Right cardiac atrium (tissue), 5 donors: ENCODE measurements at regions of chr2 and their contacts with region 1.

Region 1: GRCh38 chr2:241877989-241878970 is 8.8 kb downstream of the RTP5 start:
- DNase-seq: peak; percentile 77 to 92 (median 91)
- ATAC-seq: peak; percentile 20
- H3K4me3 ChIP-seq: no peak overlapping the region
- H3K27ac ChIP-seq: no peak overlapping the region
- H3K4me1 ChIP-seq: no peaks in the 10 kb centered on the region
- H3K27me3 ChIP-seq: no peaks in the 10 kb centered on the region

Region 2: GRCh38 chr2:241417626-241418025 is 460.7 kb before region 1 on chr2:
- intact Hi-C with region 1: no loop called
- DNase-seq: no peak
- ATAC-seq: no peak
- H3K4me3 ChIP-seq: no peak overlapping the region
- H3K27ac ChIP-seq: no peak overlapping the region
- H3K4me1 ChIP-seq: no peaks in the 10 kb centered on the region
- H3K27me3 ChIP-seq: no peaks in the 10 kb centered on the region

Region 3: DNA sequence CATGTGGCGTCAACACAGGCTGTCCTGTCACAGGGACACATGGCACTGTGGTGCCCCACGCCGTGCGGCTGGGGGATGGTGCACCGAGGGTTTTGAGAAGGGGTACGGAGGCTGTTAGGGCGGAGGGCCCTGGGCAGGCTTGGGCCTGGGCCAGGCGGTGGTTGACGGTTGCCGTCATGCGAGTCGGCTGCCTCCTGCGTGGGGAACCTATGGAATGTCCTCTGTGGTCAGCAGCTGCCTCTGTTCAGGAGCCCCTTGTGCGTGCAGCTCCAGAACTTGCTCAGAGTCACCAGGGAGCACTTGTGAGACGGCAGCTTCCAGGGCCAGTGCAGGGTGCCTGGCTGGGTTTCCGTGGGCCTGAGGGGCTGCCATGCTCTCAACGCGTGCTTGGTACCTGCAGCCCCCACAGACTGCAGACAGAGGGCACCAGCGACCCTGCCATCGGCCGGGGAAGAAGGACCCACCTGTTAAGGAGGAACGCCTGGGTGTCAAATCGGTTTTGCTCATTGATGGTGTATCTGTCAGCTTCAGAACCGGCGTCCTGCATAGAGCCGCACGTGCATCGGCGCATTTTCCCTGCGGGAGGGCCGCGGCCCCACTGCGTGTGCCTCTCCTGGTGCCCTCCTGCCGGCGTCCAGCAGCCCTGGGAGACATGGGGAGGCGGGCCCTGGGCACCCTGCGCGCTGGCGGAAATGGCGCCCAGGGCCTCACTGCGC is 153.9 kb before region 1 on chr2:
- intact Hi-C with region 1: loop called in 1 of 4 experiments (anchors 10 kb)
- DNase-seq: no peak
- ATAC-seq: no peak
- H3K4me3 ChIP-seq: no peak overlapping the region
- H3K27ac ChIP-seq: no peak overlapping the region
- H3K4me1 ChIP-seq: no peaks in the 10 kb centered on the region
- H3K27me3 ChIP-seq: no peaks in the 10 kb centered on the region

Region 4: DNA sequence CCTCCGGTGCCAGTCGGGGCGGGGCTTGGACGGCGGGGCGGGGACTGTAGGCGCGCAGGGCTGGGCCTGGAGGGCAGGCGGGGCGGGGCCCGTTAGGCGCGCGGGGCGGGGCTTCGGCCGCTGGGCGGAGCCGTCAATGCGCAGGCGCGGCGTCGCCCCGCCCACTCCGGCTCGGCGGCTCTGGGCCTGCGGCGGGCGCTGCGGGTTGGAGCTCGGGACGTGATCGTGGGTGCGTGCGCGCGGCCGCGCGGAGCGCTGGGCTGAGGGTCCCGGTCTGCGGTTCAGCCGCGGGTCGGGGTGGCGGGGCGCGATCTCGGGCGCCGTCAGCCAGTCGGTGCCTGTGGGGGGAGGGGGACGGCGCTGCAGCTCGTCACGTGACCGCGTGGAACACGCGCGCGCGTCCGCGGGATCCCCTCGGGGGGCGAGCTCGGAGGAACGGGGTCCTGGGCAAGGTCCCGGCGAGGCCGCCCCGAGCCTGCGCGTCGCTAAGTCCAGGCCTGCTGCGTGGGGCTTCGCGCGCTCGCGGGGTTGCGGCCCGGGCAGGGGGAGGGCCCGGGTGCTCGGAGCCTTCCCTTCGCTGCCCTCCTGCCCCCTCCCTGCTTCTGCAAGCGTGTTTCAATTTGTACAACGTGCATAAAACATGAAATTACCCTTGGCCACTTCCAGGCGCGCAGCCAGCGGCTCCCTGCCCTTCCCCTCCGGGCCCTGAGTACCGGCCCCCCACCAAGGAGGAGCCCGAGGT is 143.6 kb before region 1 on chr2 and contains the start of gene D2HGDH:
- intact Hi-C with region 1: loop called (anchors 10 kb)
- DNase-seq: peak; percentile 96 to 99 (median 98)
- ATAC-seq: peak; percentile 91 to 95
- H3K4me3 ChIP-seq: peak within 1 kb of the TSS; percentile 74
- H3K27ac ChIP-seq: peak within 1 kb of the TSS; percentile 75
- H3K4me1 ChIP-seq: no peaks in the 10 kb centered on the region
- H3K27me3 ChIP-seq: no peaks in the 10 kb centered on the region
- total RNA-seq, gene D2HGDH: 16.1 to 22.3 (median 18.3) TPM

Region 5: DNA sequence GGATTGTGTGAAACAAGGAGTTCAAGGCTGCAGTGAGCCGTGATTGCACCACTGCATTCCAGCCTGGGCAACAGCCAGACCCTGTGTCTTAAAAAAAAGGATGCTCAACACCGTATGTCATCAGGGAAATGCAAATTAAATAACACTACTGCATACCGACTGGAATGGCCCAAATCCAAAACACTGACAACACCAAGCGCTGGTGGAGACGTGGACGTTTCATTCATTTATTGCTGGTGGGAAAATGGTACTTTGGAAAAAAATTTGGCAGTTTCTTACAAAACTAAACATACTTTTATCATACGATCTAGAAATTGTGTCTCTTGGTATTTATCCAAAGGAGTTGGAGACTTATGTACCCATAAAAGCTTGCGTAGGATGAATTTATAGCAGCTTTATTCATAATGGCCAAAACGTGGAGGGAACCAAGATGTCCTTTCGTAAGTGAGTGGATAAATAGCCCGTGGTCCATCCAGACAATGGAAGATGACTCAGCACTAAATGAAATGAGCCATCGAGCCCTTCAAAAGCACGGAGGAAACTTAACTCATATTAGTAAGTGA is 45.1 kb before region 1 on chr2:
- intact Hi-C with region 1: no loop called
- DNase-seq: no peak
- ATAC-seq: peak in 1 of 2 donors; percentile 46
- H3K4me3 ChIP-seq: no peak overlapping the region
- H3K27ac ChIP-seq: no peak overlapping the region
- H3K4me1 ChIP-seq: no peaks in the 10 kb centered on the region
- H3K27me3 ChIP-seq: no peaks in the 10 kb centered on the region

Region 6: GRCh38 chr2:241908686-241909420 is 30.6 kb after region 1 on chr2:
- intact Hi-C with region 1: no loop called
- DNase-seq: no peak
- ATAC-seq: peak in 1 of 2 donors; percentile 31
- H3K4me3 ChIP-seq: no peak overlapping the region
- H3K27ac ChIP-seq: no peak overlapping the region
- H3K4me1 ChIP-seq: no peaks in the 10 kb centered on the region
- H3K27me3 ChIP-seq: no peaks in the 10 kb centered on the region